K562 (cell line): ENCODE measurements at regions of chr9 and their contacts with region 1.

Region 1: GRCh38 chr9:124559862-124560261 is 52.7 kb upstream of the NR5A1 start:
- DNase-seq: no peak
- ATAC-seq: no peak
- H3K4me3 ChIP-seq: no peak overlapping the region
- H3K27ac ChIP-seq: no peak overlapping the region
- H3K4me1 ChIP-seq: peaks cover 5 to 20% of the 10 kb centered on the region in 2 experiments
- H3K27me3 ChIP-seq: no peaks in the 10 kb centered on the region
- CTCF ChIP-seq: no peak
- EP300 ChIP-seq: no peak
- POLR2A ChIP-seq: no peak
- RAD21 ChIP-seq: no peak

Region 2: GRCh38 chr9:124594673-124595072 is 34.8 kb after region 1 on chr9:
- CTCF ChIA-PET with region 1: no interaction called
- POLR2A ChIA-PET with region 1: interaction called, 3 read pairs
- in situ Hi-C with region 1: no loop called
- intact Hi-C with region 1: loop called (anchors 5 kb)
- DNase-seq: no peak
- ATAC-seq: peak; percentile 19; the same call in 2 of the 3 replicates
- H3K4me3 ChIP-seq: peak overlapping the region; percentile 19; the same call in 1 of the 2 replicates
- H3K27ac ChIP-seq: peak overlapping the region; percentile 71; the same call in 2 of the 3 replicates
- H3K4me1 ChIP-seq: peaks cover 10 to 43% of the 10 kb centered on the region in 2 experiments
- H3K27me3 ChIP-seq: no peaks in the 10 kb centered on the region
- CTCF ChIP-seq: no peak
- EP300 ChIP-seq: no peak
- POLR2A ChIP-seq: no peak
- RAD21 ChIP-seq: no peak